BJ (cell line): ENCODE measurements at regions of chr20 and their contacts with region 1.

Region 1: DNA sequence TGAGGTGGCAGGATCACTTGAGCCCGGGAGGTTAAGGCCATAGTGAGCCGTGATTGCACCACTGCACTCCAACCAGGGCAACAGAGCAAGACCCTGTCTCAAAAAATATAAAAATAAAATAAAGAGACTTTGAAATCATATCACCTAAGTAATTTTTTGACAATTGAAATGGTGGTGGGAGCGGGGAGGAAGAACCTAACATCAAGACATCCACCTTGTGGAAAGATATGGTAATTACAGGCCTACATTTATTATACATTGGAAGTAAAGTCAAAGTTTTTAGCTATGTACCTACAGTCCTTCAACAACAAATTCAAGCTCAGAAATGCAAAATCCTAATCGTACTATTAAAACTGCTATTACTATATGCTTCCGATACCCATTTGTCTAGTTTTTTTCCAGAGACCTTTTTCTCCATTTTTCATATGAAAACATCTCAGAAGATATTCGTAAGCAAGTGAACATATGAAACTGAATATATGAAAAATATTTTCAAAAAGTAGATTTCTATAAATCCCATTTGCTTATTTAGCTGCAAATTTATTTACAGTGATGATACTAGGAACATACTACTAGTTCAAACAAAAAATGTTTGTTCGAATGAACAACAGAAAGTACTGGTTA is 83.3 kb downstream of the SYCP2 start:
- DNase-seq: no peak
- H3K4me3 ChIP-seq: no peak overlapping the region
- H3K27me3 ChIP-seq: no peaks in the 10 kb centered on the region
- CTCF ChIP-seq: peak; percentile 58

Region 2: GRCh38 chr20:59782986-59783640 is 67.0 kb before region 1 on chr20:
- CTCF ChIA-PET with region 1: interaction called, 75 read pairs
- POLR2A ChIA-PET with region 1: no interaction called
- DNase-seq: no peak
- H3K4me3 ChIP-seq: no peak overlapping the region
- H3K27me3 ChIP-seq: peaks cover 2% of the 10 kb centered on the region; the same call in 1 of the 2 replicates
- CTCF ChIP-seq: peak; percentile 97

Region 3: GRCh38 chr20:59903621-59904020 is 53.5 kb after region 1 on chr20:
- CTCF ChIA-PET with region 1: no interaction called
- POLR2A ChIA-PET with region 1: no interaction called
- DNase-seq: no peak
- H3K4me3 ChIP-seq: no peak overlapping the region
- H3K27me3 ChIP-seq: no peaks in the 10 kb centered on the region
- CTCF ChIP-seq: no peak

Region 4: DNA sequence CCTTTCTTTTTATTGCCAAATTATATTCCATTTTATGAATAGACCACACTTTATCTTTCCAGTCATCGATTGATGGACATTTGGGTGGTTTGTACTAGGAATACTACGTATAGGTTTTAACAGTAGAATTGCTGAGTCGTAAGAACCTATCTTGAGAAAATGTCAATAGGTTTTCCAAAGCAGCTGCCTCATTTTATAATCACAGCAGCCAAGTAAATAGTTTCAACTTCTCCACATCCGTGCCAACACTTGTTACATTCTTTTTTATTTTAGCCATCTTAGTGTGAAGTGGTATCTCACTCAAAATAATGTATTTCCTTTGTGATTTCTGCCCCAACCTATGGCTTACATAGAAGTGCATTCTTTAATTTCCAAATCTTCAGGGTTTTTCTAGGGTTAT is 587.3 kb after region 1 on chr20:
- CTCF ChIA-PET with region 1: no interaction called
- POLR2A ChIA-PET with region 1: no interaction called
- DNase-seq: no peak
- H3K4me3 ChIP-seq: no peak overlapping the region
- H3K27me3 ChIP-seq: no peaks in the 10 kb centered on the region
- CTCF ChIP-seq: no peak